Dorsolateral prefrontal cortex (tissue), 120 donors: ENCODE measurements at regions of chr6 and their contacts with region 1.

Region 1: DNA sequence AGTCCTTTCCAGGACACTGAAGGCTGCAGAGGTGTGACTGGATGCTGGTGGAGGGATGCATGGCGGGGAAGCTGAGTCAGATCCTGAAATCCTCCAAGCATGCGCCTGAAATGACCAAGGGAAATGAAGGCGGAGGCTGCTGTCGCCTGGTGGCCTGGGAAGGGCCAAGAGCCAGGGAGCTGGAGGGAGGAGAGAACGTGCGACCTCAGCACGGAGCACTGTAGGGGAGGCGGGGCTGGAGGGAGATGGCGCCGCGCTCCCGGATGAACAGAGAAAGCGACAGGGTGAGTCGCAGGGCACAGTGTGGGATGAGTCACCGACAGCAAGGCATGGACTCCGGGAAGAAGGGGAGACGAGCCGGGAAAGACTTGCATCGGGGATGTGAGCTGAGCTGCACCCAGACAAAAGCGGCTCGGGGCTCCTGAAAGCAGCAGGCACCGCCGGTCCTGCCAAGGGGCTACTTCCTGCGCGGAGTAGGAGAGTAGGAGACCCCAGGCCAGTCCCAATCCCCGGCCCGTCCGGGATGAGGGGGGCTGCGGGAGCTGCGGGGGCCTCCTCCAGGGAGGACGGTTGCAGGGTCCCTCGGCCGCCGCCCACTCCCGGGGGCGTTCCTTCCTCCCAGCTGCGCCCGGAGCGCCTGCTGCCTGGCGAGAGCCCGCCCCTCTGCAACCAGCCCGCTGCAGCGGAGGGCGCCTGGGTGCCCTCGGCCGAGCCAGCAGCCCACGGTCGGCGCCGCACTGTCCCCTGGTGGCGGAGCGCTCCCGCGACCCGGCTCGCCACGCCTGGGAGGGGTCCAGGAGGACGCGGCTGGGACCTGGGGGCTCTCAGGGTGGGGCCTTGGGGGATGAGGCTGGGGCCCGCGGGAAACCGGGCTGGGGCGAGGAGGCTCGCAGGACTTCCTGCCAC is 11.0 kb upstream of the NQO2 start:
- DNase-seq: peak; percentile 72 to 95 (median 90)
- H3K4me3 ChIP-seq: peak overlapping the region; percentile 53 to 96 (median 87)
- H3K27ac ChIP-seq: peak overlapping the region; percentile 90 to 100 (median 99)
- H3K27me3 ChIP-seq: no peaks in the 10 kb centered on the region
- CTCF ChIP-seq: peak; percentile 47 to 94 (median 75)

Region 2: GRCh38 chr6:2848851-2849250 is 139.8 kb before region 1 on chr6:
- intact Hi-C with region 1: loop called (anchors 2 to 5 kb)
- DNase-seq: no peak
- H3K4me3 ChIP-seq: no peak overlapping the region
- H3K27ac ChIP-seq: no peak overlapping the region
- H3K27me3 ChIP-seq: no peaks in the 10 kb centered on the region
- CTCF ChIP-seq: no peak

Region 3: DNA sequence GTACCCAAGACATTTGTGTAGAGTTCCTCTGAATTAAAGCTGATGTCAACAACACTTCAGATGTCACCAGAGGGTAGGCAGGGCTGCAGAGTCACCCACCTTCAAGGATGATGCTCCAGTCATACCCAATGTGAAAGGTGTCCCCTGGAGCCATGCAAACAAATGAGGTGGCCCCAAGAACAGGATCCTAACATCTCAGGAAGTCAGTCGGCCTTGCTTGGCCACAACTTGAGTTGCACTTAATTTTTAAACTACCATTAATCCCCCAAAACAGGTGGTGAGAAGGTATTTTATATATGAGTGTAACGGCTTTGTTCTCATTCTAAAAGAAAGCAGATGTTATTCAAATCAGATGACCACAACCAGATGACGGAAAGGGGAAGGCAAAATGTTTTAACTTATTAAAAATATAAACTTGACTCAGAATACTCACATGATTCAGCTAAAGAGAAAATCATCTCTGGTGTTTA is 125.9 kb before region 1 on chr6:
- intact Hi-C with region 1: no loop called
- DNase-seq: no peak
- H3K4me3 ChIP-seq: no peak overlapping the region
- H3K27ac ChIP-seq: no peak overlapping the region
- H3K27me3 ChIP-seq: no peaks in the 10 kb centered on the region
- CTCF ChIP-seq: no peak

Region 4: GRCh38 chr6:2931970-2932748 is 56.5 kb before region 1 on chr6:
- intact Hi-C with region 1: loop called in 1 of 2 experiments (anchors 10 kb)
- DNase-seq: peak; percentile 69 to 91 (median 83)
- H3K4me3 ChIP-seq: peak overlapping the region in 54 of 59 donors; percentile 9 to 69 (median 40)
- H3K27ac ChIP-seq: peak overlapping the region in 10 of 59 donors; percentile 3 to 62 (median 32)
- H3K27me3 ChIP-seq: no peaks in the 10 kb centered on the region
- CTCF ChIP-seq: peak; percentile 56 to 99 (median 96)

Region 5: GRCh38 chr6:2971420-2972218 is 17.1 kb before region 1 on chr6 and contains the start of gene SERPINB6:
- intact Hi-C with region 1: loop called (anchors 1 to 2 kb)
- DNase-seq: peak; percentile 58 to 84 (median 79)
- H3K4me3 ChIP-seq: peak within 1 kb of the TSS; percentile 58 to 89 (median 79)
- H3K27ac ChIP-seq: peak within 1 kb of the TSS; percentile 82 to 100 (median 98)
- H3K27me3 ChIP-seq: no peaks in the 10 kb centered on the region
- CTCF ChIP-seq: peak in 10 of 56 donors; percentile 0 to 26 (median 10)
- total RNA-seq, gene SERPINB6: 44.0 to 114 (median 69.4) TPM